Naive thymus-derived CD4-positive, alpha-beta T cell (primary cell): ENCODE measurements at regions of chr17 and their contacts with region 1.

Region 1: DNA sequence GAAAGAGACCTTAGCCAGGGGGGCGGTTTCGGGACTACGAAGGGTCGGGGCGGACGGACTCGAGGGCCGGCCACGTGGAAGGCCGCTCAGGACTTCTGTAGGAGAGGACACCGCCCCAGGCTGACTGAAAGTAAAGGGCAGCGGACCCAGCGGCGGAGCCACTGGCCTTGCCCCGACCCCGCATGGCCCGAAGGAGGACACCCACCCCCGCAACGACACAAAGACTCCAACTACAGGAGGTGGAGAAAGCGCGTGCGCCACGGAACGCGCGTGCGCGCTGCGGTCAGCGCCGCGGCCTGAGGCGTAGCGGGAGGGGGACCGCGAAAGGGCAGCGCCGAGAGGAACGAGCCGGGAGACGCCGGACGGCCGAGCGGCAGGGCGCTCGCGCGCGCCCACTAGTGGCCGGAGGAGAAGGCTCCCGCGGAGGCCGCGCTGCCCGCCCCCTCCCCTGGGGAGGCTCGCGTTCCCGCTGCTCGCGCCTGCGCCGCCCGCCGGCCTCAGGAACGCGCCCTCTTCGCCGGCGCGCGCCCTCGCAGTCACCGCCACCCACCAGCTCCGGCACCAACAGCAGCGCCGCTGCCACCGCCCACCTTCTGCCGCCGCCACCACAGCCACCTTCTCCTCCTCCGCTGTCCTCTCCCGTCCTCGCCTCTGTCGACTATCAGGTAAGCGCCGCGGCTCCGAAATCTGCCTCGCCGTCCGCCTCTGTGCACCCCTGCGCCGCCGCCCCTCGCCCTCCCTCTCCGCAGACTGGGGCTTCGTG is at the start of gene MAPT:
- DNase-seq: peak; percentile 65 to 89 (median 80)
- ATAC-seq: peak; percentile 96
- H3K4me3 ChIP-seq: peak within 1 kb of the TSS; percentile 75
- H3K4me3 Mint-ChIP-seq: peak within 1 kb of the TSS; percentile 86 to 96 (median 92)
- H3K27ac ChIP-seq: peak within 1 kb of the TSS; percentile 26
- H3K27ac Mint-ChIP-seq: peak within 1 kb of the TSS in 8 of 9 donors; percentile 12 to 89 (median 68)
- H3K4me1 ChIP-seq: peaks cover 7 to 27% of the 10 kb centered on the region in 2 donors
- H3K4me1 Mint-ChIP-seq: peaks cover 6 to 32% (median 22%) of the 10 kb centered on the region in 7 donors
- H3K27me3 ChIP-seq: peaks cover 18 to 19% of the 10 kb centered on the region in 2 donors
- H3K27me3 Mint-ChIP-seq: peaks cover 18 to 68% (median 18%) of the 10 kb centered on the region in 5 donors
- total RNA-seq, gene MAPT: 0.27 to 1.3 (median 1.1) TPM

Region 2: GRCh38 chr17:45782889-45783592 is 111.2 kb before region 1 on chr17:
- CTCF ChIA-PET with region 1: no interaction called
- POLR2A ChIA-PET with region 1: no interaction called
- intact Hi-C with region 1: loop called in 1 of 2 experiments (anchors 10 kb)
- DNase-seq: peak in 3 of 9 donors; percentile 12 to 55 (median 18)
- ATAC-seq: peak; percentile 51
- H3K4me3 ChIP-seq: no peak overlapping the region
- H3K4me3 Mint-ChIP-seq: peak overlapping the region; percentile 59 to 83 (median 74)
- H3K27ac ChIP-seq: no peak overlapping the region
- H3K27ac Mint-ChIP-seq: peak overlapping the region in 1 of 9 donors; percentile 59
- H3K4me1 ChIP-seq: no peaks in the 10 kb centered on the region
- H3K4me1 Mint-ChIP-seq: peaks cover 0 to 9% (median 4%) of the 10 kb centered on the region in 7 donors
- H3K27me3 ChIP-seq: peaks cover 5 to 12% of the 10 kb centered on the region in 2 donors
- H3K27me3 Mint-ChIP-seq: peaks cover 58 to 76% (median 70%) of the 10 kb centered on the region in 5 donors

Region 3: DNA sequence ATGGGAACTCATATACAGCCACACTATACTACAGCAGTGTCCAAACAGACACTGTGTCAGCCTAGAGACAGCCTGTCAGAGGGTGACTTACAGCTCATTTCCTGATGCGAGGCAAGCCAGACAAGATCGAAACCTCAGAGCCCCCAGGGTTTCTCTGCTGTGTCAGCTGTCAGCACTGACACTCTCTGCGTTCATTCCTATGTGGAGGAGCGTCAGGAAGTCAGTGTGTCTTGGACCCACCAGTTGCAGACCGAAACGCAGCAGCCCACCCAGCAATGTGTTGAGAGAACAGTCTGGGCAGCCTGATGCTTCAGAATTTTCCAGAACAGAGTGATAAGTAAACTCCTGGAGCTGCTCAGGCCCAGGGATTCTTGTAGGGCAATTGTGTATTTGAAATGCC is 20.5 kb before region 1 on chr17:
- CTCF ChIA-PET with region 1: no interaction called
- POLR2A ChIA-PET with region 1: no interaction called
- intact Hi-C with region 1: no loop called
- DNase-seq: peak in 3 of 9 donors; percentile 11 to 28 (median 27)
- ATAC-seq: peak; percentile 82
- H3K4me3 ChIP-seq: no peak overlapping the region
- H3K4me3 Mint-ChIP-seq: peak overlapping the region in 9 of 10 donors; percentile 28 to 80 (median 66)
- H3K27ac ChIP-seq: no peak overlapping the region
- H3K27ac Mint-ChIP-seq: peak overlapping the region in 7 of 9 donors; percentile 6 to 91 (median 76)
- H3K4me1 ChIP-seq: peaks cover 0 to 8% of the 10 kb centered on the region in 2 donors
- H3K4me1 Mint-ChIP-seq: peaks cover 0 to 13% (median 10%) of the 10 kb centered on the region in 7 donors
- H3K27me3 ChIP-seq: no peaks in the 10 kb centered on the region
- H3K27me3 Mint-ChIP-seq: peaks cover 0 to 17% (median 0%) of the 10 kb centered on the region in 5 donors

Region 4: DNA sequence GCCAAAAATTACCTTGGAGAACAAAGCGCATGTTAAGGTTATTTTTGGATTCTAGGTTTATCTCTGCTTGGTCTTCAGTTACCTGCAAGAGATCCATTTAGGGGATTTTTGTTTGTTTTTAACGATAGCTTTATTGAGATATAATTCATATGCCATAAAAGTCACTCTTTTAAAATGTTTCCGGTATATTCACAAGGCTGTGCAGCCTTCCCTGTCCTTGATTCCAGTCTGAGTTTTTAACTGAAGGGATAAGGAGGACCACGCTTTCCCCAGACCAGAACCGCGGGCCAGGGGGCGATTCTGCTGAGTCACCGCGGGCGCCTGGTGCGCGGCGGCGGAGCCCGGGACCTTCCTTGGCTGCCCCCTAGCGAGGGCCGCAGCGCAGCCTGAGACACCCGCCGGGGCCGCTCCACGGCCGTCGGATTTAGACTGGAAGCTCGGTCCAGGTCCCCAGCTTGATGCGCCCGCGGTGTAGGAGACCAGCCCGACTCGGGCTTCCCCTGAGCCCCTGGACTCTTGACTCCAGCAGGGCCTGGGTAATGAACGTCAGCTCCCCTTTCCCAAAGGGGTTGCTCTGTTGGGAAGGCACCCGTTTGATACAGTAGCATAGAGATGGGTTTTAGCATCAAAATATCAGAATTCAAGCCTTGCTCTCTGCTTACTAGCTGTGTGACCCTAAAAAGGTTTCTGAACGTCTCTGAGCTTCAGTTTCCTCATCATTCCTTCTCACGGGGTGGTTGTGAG is 54.9 kb after region 1 on chr17:
- CTCF ChIA-PET with region 1: no interaction called
- POLR2A ChIA-PET with region 1: no interaction called
- intact Hi-C with region 1: loop called in 1 of 2 experiments (anchors 10 kb)
- DNase-seq: peak; percentile 2 to 77 (median 25)
- ATAC-seq: peak; percentile 92
- H3K4me3 ChIP-seq: no peak overlapping the region
- H3K4me3 Mint-ChIP-seq: peak overlapping the region in 9 of 10 donors; percentile 47 to 79 (median 54)
- H3K27ac ChIP-seq: no peak overlapping the region
- H3K27ac Mint-ChIP-seq: no peak overlapping the region
- H3K4me1 ChIP-seq: peaks cover 0 to 6% of the 10 kb centered on the region in 2 donors
- H3K4me1 Mint-ChIP-seq: peaks cover 0 to 7% (median 0%) of the 10 kb centered on the region in 7 donors
- H3K27me3 ChIP-seq: peaks cover 0 to 6% of the 10 kb centered on the region in 2 donors
- H3K27me3 Mint-ChIP-seq: peaks cover 23 to 40% (median 34%) of the 10 kb centered on the region in 5 donors

Region 5: GRCh38 chr17:46154151-46154816 is 260.1 kb after region 1 on chr17:
- CTCF ChIA-PET with region 1: no interaction called
- POLR2A ChIA-PET with region 1: no interaction called
- intact Hi-C with region 1: no loop called
- DNase-seq: peak in 3 of 9 donors; percentile 14 to 44 (median 24)
- ATAC-seq: peak; percentile 58
- H3K4me3 ChIP-seq: peak overlapping the region; percentile 10
- H3K4me3 Mint-ChIP-seq: peak overlapping the region; percentile 57 to 82 (median 70)
- H3K27ac ChIP-seq: peak overlapping the region; percentile 27
- H3K27ac Mint-ChIP-seq: peak overlapping the region; percentile 4 to 87 (median 66)
- H3K4me1 ChIP-seq: peaks cover 87 to 89% of the 10 kb centered on the region in 2 donors
- H3K4me1 Mint-ChIP-seq: peaks cover 78 to 100% (median 90%) of the 10 kb centered on the region in 7 donors
- H3K27me3 ChIP-seq: no peaks in the 10 kb centered on the region
- H3K27me3 Mint-ChIP-seq: no peaks in the 10 kb centered on the region

Region 6: DNA sequence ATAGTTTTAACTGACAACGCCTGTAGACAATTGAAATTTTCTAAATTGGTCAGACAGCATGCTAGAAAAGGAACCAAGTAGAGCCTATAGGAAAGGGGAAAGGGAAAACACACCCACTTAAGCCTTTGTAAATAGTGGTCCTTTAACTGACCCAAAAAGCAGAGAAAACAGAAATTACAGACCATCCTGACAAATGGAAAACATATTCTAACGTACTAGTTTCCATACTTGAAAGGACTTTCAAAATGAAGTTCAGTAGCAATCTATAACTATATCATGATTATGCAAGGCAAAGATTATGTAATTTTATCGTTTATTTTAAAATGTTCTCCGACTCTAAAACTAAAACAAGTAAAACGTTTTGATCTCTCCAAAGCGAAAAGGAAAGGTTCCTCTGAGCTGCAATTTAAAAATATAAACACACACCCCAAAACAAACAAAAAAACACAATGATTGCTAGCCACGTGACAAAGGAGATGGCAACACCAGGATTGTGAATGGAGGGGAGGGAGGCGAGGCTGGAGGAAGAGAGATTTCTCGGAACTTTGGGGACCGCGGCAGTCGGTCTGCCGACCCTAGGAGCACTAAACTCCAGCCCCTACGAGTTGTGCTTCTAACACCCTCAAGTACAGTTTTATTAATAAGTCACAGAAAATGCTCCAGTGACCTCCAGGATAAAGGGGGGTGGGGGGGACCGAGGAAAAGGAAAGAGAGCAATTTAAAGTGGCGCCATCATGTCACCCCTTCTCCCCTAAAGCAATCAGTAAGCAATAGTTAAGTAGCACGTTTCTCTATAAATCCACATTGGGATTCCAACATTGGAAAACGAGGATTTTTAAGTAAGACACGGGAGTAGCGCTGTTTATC is 297.4 kb after region 1 on chr17:
- CTCF ChIA-PET with region 1: no interaction called
- POLR2A ChIA-PET with region 1: no interaction called
- intact Hi-C with region 1: no loop called
- DNase-seq: no peak
- ATAC-seq: no peak
- H3K4me3 ChIP-seq: peak overlapping the region; percentile 90
- H3K4me3 Mint-ChIP-seq: peak overlapping the region; percentile 93 to 100 (median 98)
- H3K27ac ChIP-seq: peak overlapping the region; percentile 94
- H3K27ac Mint-ChIP-seq: peak overlapping the region; percentile 89 to 100 (median 98)
- H3K4me1 ChIP-seq: peaks cover 52 to 67% of the 10 kb centered on the region in 2 donors
- H3K4me1 Mint-ChIP-seq: peaks cover 52 to 70% (median 63%) of the 10 kb centered on the region in 7 donors
- H3K27me3 ChIP-seq: no peaks in the 10 kb centered on the region
- H3K27me3 Mint-ChIP-seq: no peaks in the 10 kb centered on the region

Region 7: DNA sequence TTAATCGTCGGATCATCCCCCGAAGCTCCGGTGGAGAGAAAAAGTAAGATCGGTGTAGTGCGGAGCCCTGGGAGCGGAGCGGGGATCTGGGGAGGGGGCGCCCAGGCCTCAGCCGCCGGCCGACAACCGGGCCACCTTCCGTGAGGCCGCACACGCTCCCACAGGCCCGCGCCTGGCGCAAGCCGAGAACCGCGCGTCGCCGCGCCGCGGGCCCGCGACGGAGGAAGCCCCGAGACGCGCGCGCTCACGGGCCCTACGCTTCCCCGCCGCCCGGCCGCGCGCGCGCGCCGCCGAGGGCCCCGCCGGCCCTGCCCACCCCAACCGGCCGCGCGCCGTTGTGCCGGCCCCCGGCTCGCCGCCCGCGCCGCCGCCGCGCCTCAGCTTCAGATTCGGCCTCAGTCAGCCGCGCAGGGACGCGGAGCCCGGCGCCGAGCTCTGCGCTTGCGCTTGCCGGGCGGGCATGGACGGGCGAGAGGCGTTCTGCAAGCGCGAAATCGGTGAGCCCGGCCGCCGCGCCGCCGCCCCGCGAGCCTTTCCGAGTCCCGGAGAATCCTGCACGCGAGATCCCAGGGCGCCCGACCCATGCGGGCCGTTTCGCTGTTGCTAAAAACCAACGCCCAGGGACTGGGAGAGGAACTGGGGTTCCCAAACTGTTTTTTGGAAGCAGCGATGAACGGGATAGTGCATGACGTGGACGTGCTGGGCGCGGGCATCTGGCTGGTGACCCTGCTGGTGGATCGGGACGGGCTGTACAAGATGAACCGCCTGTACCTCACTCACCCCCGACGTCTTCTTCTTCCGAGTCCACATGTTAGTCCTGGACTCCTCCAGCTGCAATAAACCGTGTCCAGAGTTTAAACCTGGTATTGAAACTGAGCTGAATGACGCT is 372.7 kb after region 1 on chr17:
- CTCF ChIA-PET with region 1: no interaction called
- POLR2A ChIA-PET with region 1: no interaction called
- intact Hi-C with region 1: loop called (anchors 1 to 5 kb)
- DNase-seq: peak; percentile 44 to 94 (median 81)
- ATAC-seq: peak; percentile 87
- H3K4me3 ChIP-seq: peak overlapping the region; percentile 79
- H3K4me3 Mint-ChIP-seq: peak overlapping the region; percentile 89 to 96 (median 93)
- H3K27ac ChIP-seq: peak overlapping the region; percentile 79
- H3K27ac Mint-ChIP-seq: peak overlapping the region; percentile 76 to 95 (median 85)
- H3K4me1 ChIP-seq: peaks cover 25% of the 10 kb centered on the region in 2 donors
- H3K4me1 Mint-ChIP-seq: peaks cover 18 to 38% (median 34%) of the 10 kb centered on the region in 7 donors
- H3K27me3 ChIP-seq: no peaks in the 10 kb centered on the region
- H3K27me3 Mint-ChIP-seq: peaks cover 0 to 52% (median 0%) of the 10 kb centered on the region in 5 donors